Caco-2 (cell line): ENCODE measurements at regions of chr9 and their contacts with region 1.

Region 1: DNA sequence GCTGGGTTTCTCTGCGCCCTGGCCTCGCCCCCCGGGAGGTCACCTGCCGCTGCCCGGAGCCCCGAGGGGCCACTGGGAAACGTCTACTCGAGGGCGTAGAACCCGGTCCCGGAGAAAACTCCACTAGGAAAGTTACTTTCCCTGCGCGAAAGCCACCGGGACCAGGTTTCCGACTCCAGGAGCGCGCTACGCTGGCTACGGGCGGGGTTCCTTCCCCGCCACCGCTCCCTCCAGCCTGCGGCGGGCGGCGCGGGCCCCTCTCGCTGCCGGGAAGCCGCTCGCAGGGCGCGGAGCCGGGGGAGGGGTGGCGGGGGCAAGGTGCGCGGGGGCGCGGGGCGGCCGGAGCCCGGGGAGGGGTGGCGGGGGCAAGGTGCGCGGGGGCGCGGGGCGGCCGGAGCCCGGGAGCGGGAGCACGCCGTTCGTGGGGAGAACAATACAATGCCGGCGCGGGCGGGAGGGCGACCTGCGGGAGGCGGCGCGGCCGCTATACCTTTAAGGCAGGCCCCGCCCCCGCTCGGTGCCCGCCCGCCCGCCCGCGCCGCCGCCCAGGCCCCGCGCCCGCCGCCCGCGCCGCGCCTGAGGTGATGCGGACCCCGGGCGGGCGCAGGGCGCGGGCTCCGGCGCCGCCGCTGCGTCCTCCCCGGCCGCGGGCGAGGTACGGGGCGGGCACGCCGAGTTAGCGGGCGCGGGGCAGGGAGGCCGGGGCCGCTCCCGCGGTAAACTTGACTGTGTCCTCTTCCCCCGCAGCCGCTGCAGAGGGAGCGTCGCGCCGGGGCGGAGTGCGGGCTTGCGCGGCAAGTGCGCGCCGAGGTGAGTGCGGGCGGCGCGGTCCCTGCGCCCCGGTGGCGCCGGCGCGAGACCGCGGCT is 278.1 kb downstream of the AOPEP start:
- DNase-seq: peak; percentile 73 to 78
- H3K4me3 ChIP-seq: peak overlapping the region; percentile 86
- H3K4me3 Mint-ChIP-seq: peak overlapping the region; percentile 81
- H3K27ac Mint-ChIP-seq: no peak overlapping the region
- H3K4me1 ChIP-seq: peaks cover 40% of the 10 kb centered on the region
- H3K4me1 Mint-ChIP-seq: peaks cover 38% of the 10 kb centered on the region
- H3K27me3 ChIP-seq: no peaks in the 10 kb centered on the region
- H3K27me3 Mint-ChIP-seq: no peaks in the 10 kb centered on the region
- CTCF ChIP-seq: no peak

Region 2: GRCh38 chr9:94922098-94922607 is 82.5 kb before region 1 on chr9:
- CTCF ChIA-PET with region 1: no interaction called
- POLR2A ChIA-PET with region 1: interaction called, 3 read pairs
- intact Hi-C with region 1: loop called (anchors 5 kb)
- DNase-seq: peak in 1 of 2 experiments; percentile 46
- H3K4me3 ChIP-seq: no peak overlapping the region
- H3K4me3 Mint-ChIP-seq: peak overlapping the region; percentile 17
- H3K27ac Mint-ChIP-seq: peak overlapping the region; percentile 84
- H3K4me1 ChIP-seq: peaks cover 82% of the 10 kb centered on the region
- H3K4me1 Mint-ChIP-seq: peaks cover 69% of the 10 kb centered on the region
- H3K27me3 ChIP-seq: no peaks in the 10 kb centered on the region
- H3K27me3 Mint-ChIP-seq: no peaks in the 10 kb centered on the region
- CTCF ChIP-seq: no peak

Region 3: DNA sequence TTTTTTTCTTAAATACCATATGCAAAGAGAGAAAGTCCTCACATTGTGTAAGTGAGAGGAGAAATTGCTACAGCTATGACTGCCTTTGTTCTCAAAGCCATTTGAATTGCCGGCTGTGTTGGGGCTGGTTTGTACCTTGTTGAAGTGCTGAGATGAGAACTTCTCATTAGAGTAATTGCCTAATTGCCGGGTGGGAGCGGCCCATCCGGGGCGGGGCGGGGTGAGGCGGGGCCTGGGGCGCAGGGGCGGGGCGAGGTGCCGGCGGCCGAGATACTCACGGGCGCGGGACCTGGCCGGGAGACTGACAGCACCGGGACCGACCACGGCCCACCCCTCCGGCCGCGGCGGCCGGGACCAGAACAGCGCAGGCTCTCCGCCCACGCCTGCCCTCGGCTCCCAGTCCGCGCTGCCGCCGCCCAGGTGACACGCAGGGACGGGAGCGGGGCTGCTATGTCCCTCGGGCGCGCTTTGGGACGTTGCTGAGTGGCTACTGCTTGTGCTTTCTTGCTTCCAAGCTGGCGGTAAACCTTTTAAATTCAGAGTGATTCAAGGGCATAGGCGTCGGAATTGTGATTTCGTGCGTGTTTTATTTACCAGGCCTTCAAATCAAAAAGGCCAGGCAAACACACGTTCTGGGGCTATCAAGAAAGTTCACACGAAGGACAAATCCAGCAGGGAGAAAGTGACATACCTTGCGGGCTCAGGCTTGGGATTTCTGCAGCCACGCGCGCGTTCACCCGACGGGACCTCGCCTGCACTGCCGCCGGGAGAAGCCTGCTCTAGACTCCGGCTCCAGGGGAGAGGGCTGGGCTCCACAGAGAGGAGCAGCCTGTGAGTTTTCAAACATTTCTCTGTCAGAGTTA is 43.8 kb after region 1 on chr9:
- CTCF ChIA-PET with region 1: no interaction called
- POLR2A ChIA-PET with region 1: no interaction called
- intact Hi-C with region 1: no loop called
- DNase-seq: peak; percentile 76 to 82
- H3K4me3 ChIP-seq: peak overlapping the region; percentile 62
- H3K4me3 Mint-ChIP-seq: peak overlapping the region; percentile 91
- H3K27ac Mint-ChIP-seq: peak overlapping the region; percentile 82
- H3K4me1 ChIP-seq: peaks cover 19% of the 10 kb centered on the region
- H3K4me1 Mint-ChIP-seq: peaks cover 22% of the 10 kb centered on the region
- H3K27me3 ChIP-seq: no peaks in the 10 kb centered on the region
- H3K27me3 Mint-ChIP-seq: no peaks in the 10 kb centered on the region
- CTCF ChIP-seq: no peak